ENCODE measurements at regions of chr6 and their contacts with region 1.

Region 1: GRCh38 chr6:53926525-53926924 is 131.7 kb downstream of the LRRC1 start:
- DNase-seq: no peak
- H3K4me3 Mint-ChIP-seq: peak overlapping the region; percentile 39
- H3K27ac Mint-ChIP-seq: peak overlapping the region; percentile 96
- H3K4me1 Mint-ChIP-seq: peaks cover 42% of the 10 kb centered on the region
- H3K27me3 Mint-ChIP-seq: no peaks in the 10 kb centered on the region
- CTCF ChIP-seq: no peak

Region 2: GRCh38 chr6:53741034-53741823 is 185.3 kb before region 1 on chr6:
- CTCF ChIA-PET with region 1: no interaction called
- intact Hi-C with region 1: loop called (anchors 5 kb)
- DNase-seq: no peak
- H3K4me3 Mint-ChIP-seq: no peak overlapping the region
- H3K27ac Mint-ChIP-seq: no peak overlapping the region
- H3K4me1 Mint-ChIP-seq: peaks cover 35% of the 10 kb centered on the region
- H3K27me3 Mint-ChIP-seq: no peaks in the 10 kb centered on the region
- CTCF ChIP-seq: no peak

Region 3: GRCh38 chr6:53794720-53795253 is 131.7 kb before region 1 on chr6 and contains the start of gene LRRC1:
- CTCF ChIA-PET with region 1: interaction called, 6 read pairs
- intact Hi-C with region 1: loop called (anchors 10 kb)
- DNase-seq: peak; percentile 96
- H3K4me3 Mint-ChIP-seq: peak within 1 kb of the TSS; percentile 95
- H3K27ac Mint-ChIP-seq: peak within 1 kb of the TSS; percentile 91
- H3K4me1 Mint-ChIP-seq: peaks cover 58% of the 10 kb centered on the region
- H3K27me3 Mint-ChIP-seq: no peaks in the 10 kb centered on the region
- CTCF ChIP-seq: no peak
- total RNA-seq, gene LRRC1: 26.6 TPM in 2 replicates

Region 4: GRCh38 chr6:53811082-53811481 is 115.4 kb before region 1 on chr6:
- CTCF ChIA-PET with region 1: no interaction called
- intact Hi-C with region 1: loop called (anchors 5 kb)
- DNase-seq: peak; percentile 74
- H3K4me3 Mint-ChIP-seq: peak overlapping the region; percentile 19
- H3K27ac Mint-ChIP-seq: no peak overlapping the region
- H3K4me1 Mint-ChIP-seq: peaks cover 68% of the 10 kb centered on the region
- H3K27me3 Mint-ChIP-seq: no peaks in the 10 kb centered on the region
- CTCF ChIP-seq: no peak

Region 5: GRCh38 chr6:53825532-53826321 is 100.8 kb before region 1 on chr6:
- CTCF ChIA-PET with region 1: no interaction called
- intact Hi-C with region 1: no loop called
- DNase-seq: no peak
- H3K4me3 Mint-ChIP-seq: no peak overlapping the region
- H3K27ac Mint-ChIP-seq: no peak overlapping the region
- H3K4me1 Mint-ChIP-seq: peaks cover 59% of the 10 kb centered on the region
- H3K27me3 Mint-ChIP-seq: no peaks in the 10 kb centered on the region
- CTCF ChIP-seq: no peak

Region 6: GRCh38 chr6:53854843-53855567 is 71.5 kb before region 1 on chr6:
- CTCF ChIA-PET with region 1: no interaction called
- intact Hi-C with region 1: loop called (anchors 5 kb)
- DNase-seq: peak; percentile 49
- H3K4me3 Mint-ChIP-seq: peak overlapping the region; percentile 6
- H3K27ac Mint-ChIP-seq: peak overlapping the region; percentile 67
- H3K4me1 Mint-ChIP-seq: peaks cover 49% of the 10 kb centered on the region
- H3K27me3 Mint-ChIP-seq: no peaks in the 10 kb centered on the region
- CTCF ChIP-seq: no peak

Measured in Calu3 (cell line).